ENCODE measurements at regions of chr7 and their contacts with region 1.

Region 1: GRCh38 chr7:50092579-50093491 is at the start of gene ZPBP:
- DNase-seq: peak; percentile 38
- H3K4me3 Mint-ChIP-seq: no peak within 1 kb of the TSS
- H3K27ac Mint-ChIP-seq: no peak within 1 kb of the TSS
- H3K4me1 Mint-ChIP-seq: no peaks in the 10 kb centered on the region
- H3K27me3 Mint-ChIP-seq: peaks cover 44% of the 10 kb centered on the region
- CTCF ChIP-seq: peak; percentile 87
- total RNA-seq, gene ZPBP: not detected in 2 replicates

Region 2: DNA sequence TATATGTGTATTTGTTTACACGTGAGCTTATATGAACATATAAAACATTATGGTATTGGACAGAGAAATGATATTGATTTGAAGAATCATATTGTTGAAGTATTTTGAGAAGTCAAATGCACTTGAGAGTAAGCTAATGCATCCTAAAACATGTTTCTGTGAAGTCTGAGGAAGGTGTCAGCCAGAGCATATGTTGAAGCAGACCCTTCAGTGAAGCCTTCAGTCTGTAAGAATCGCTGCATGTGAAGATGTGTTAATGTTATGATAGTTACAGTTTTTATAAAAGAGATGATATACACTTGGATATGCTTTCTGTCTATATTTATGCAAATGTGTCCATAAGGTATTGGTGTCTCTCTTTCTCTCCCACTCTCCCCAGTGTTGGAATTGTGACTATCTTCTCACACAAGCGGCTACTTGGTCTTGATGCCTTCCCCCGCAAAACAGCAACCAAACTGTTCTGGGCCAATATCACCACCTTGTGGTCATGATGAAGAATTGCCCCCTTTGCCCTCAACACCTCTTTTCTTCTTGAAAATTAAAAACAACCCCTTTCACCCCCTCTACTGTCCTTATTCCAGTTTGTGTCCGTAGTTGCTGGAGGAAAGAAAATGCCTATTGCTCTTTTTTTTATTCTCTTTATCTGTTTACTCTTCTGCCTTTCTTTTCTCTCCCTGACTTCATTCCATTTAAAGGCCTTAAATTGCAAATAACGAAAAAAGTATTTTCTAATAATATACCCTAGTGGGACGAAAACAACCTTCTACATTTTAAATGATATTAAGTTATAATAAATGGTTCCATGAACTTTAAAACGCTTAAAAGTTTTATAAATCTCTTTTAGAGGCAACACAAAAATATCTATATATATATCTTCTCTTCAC is 276.6 kb after region 1 on chr7:
- CTCF ChIA-PET with region 1: no interaction called
- intact Hi-C with region 1: loop called (anchors 1 kb)
- DNase-seq: no peak
- H3K4me3 Mint-ChIP-seq: no peak overlapping the region
- H3K27ac Mint-ChIP-seq: no peak overlapping the region
- H3K4me1 Mint-ChIP-seq: no peaks in the 10 kb centered on the region
- H3K27me3 Mint-ChIP-seq: peaks cover 83% of the 10 kb centered on the region
- CTCF ChIP-seq: peak; percentile 68

Region 3: DNA sequence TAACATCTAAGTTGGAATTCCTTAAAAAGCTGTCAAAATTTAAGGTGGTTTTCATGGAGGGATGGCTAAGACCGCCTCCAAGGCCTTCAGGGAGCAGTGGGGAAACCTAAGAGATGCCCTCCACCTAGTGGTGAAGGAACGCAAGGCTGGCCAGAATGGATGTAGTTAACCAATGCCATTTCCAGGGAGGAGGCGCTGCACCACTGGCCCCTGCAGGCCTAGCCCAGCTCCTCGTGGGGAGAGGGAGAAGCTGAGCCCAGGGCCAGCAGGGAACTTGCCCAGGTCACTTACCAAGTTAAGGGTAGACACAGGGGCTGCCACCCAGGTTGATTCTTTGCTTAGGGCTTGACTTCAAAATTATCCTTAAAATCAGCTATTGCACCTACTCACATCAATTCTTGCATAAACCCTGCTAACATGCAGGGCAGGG is 325.3 kb after region 1 on chr7:
- CTCF ChIA-PET with region 1: interaction called, 5 read pairs
- intact Hi-C with region 1: loop called (anchors 1 kb)
- DNase-seq: peak; percentile 90
- H3K4me3 Mint-ChIP-seq: no peak overlapping the region
- H3K27ac Mint-ChIP-seq: no peak overlapping the region
- H3K4me1 Mint-ChIP-seq: no peaks in the 10 kb centered on the region
- H3K27me3 Mint-ChIP-seq: peaks cover 16% of the 10 kb centered on the region
- CTCF ChIP-seq: peak; percentile 96

Region 4: GRCh38 chr7:50632561-50633413 is 540.0 kb after region 1 on chr7:
- CTCF ChIA-PET with region 1: interaction called, 4 read pairs
- intact Hi-C with region 1: loop called (anchors 2 kb)
- DNase-seq: peak; percentile 80
- H3K4me3 Mint-ChIP-seq: no peak overlapping the region
- H3K27ac Mint-ChIP-seq: peak overlapping the region; percentile 23
- H3K4me1 Mint-ChIP-seq: peaks cover 26% of the 10 kb centered on the region
- H3K27me3 Mint-ChIP-seq: no peaks in the 10 kb centered on the region
- CTCF ChIP-seq: peak; percentile 98